ENCODE measurements at regions of chr7 and their contacts with region 1.

Region 1: GRCh38 chr7:139370301-139370942 is 10.7 kb downstream of the LUC7L2 start:
- DNase-seq: no peak
- ATAC-seq: no peak
- H3K4me3 Mint-ChIP-seq: no peak overlapping the region
- H3K27ac Mint-ChIP-seq: no peak overlapping the region
- H3K4me1 Mint-ChIP-seq: peaks cover 42% of the 10 kb centered on the region
- H3K27me3 Mint-ChIP-seq: no peaks in the 10 kb centered on the region
- CTCF ChIP-seq: no peak

Region 2: GRCh38 chr7:138515001-138515528 is 855.4 kb before region 1 on chr7:
- CTCF ChIA-PET with region 1: no interaction called
- POLR2A ChIA-PET with region 1: no interaction called
- intact Hi-C with region 1: no loop called
- DNase-seq: no peak
- ATAC-seq: no peak
- H3K4me3 Mint-ChIP-seq: no peak overlapping the region
- H3K27ac Mint-ChIP-seq: no peak overlapping the region
- H3K4me1 Mint-ChIP-seq: peaks cover 12% of the 10 kb centered on the region
- H3K27me3 Mint-ChIP-seq: no peaks in the 10 kb centered on the region
- CTCF ChIP-seq: no peak

Region 3: DNA sequence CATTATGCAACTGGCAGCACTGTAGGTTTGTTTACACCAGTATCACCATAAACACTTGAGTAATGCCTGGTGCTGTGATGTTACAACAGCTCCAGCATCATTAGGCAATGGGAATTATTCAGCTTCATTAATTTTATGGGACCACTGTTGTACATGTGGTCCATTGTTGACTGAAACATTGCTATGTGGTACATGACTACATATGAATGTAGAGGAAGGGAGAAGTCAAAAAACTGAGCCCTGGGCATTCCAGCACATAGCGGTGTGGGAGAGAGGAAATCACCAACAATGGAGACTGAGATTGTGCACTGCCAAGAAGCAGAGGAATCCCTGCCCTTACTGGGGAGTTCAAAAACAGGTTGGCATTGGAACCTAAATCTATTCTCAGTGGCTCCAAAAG is 821.3 kb before region 1 on chr7:
- CTCF ChIA-PET with region 1: no interaction called
- POLR2A ChIA-PET with region 1: no interaction called
- intact Hi-C with region 1: no loop called
- DNase-seq: no peak
- ATAC-seq: no peak
- H3K4me3 Mint-ChIP-seq: no peak overlapping the region
- H3K27ac Mint-ChIP-seq: no peak overlapping the region
- H3K4me1 Mint-ChIP-seq: no peaks in the 10 kb centered on the region
- H3K27me3 Mint-ChIP-seq: no peaks in the 10 kb centered on the region
- CTCF ChIP-seq: no peak

Region 4: DNA sequence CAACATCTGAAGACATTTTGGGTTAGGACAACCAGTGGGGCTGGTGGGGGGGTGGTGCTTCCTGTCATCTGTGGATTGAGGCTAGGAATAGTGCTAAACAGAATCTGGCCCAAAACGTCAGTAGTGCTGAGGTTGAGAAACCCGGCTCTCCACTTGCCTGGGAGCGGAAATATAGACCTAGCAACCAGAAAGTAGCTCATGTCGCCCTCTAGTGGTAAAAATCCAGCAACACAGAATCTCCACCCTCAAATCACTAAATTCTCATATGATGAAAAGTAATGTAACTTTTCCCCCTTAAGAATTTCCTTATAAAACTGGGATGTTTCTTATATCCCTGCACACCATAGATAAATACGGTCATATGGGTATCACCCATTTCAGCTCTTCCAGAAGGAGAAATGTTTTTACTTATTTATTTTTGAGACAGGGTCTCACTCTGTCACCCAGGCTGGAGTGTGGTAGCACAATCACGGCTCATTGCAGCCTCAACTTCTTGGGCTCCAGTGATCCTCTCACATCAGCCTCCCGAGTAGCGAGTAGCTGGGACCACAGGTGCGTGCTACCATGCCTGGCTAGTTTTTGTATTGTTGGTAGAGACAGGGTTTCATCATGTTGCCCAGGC is 295.3 kb before region 1 on chr7:
- CTCF ChIA-PET with region 1: no interaction called
- POLR2A ChIA-PET with region 1: no interaction called
- intact Hi-C with region 1: no loop called
- DNase-seq: no peak
- ATAC-seq: peak; percentile 87
- H3K4me3 Mint-ChIP-seq: no peak overlapping the region
- H3K27ac Mint-ChIP-seq: peak overlapping the region; percentile 60
- H3K4me1 Mint-ChIP-seq: peaks cover 17% of the 10 kb centered on the region
- H3K27me3 Mint-ChIP-seq: no peaks in the 10 kb centered on the region
- CTCF ChIP-seq: no peak

Region 5: GRCh38 chr7:139359366-139360209 is 10.8 kb before region 1 on chr7 and contains the start of gene LUC7L2:
- CTCF ChIA-PET with region 1: no interaction called
- POLR2A ChIA-PET with region 1: interaction called, 11 read pairs
- intact Hi-C with region 1: no loop called
- DNase-seq: peak; percentile 97
- ATAC-seq: peak; percentile 78
- H3K4me3 Mint-ChIP-seq: peak within 1 kb of the TSS; percentile 98
- H3K27ac Mint-ChIP-seq: peak within 1 kb of the TSS; percentile 100
- H3K4me1 Mint-ChIP-seq: peaks cover 41% of the 10 kb centered on the region
- H3K27me3 Mint-ChIP-seq: no peaks in the 10 kb centered on the region
- CTCF ChIP-seq: no peak
- total RNA-seq, gene LUC7L2: 94.0 and 118 TPM in 2 replicates

Region 6: DNA sequence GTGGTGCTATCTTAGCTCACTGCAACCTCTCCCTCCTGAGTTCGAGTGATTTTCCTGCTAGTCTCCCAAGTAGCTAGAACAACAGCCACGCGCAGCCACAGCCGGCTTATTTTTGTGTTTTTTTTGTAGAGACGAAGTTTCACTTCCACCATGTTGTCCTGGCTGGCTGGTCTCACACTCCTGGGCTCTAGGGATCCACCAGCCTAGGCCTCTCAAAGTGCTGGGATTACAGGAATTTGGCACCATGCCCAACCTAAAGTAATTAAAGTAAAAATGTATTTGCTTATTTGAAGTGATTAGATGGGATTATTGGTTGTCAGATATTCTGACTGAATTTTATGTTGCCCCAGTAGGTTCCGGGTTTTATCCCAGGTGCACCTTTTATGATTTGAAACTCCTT is 12.0 kb after region 1 on chr7:
- CTCF ChIA-PET with region 1: interaction called, 3 read pairs
- POLR2A ChIA-PET with region 1: interaction called, 9 read pairs
- intact Hi-C with region 1: loop called (anchors 2 kb)
- DNase-seq: no peak
- ATAC-seq: no peak
- H3K4me3 Mint-ChIP-seq: no peak overlapping the region
- H3K27ac Mint-ChIP-seq: no peak overlapping the region
- H3K4me1 Mint-ChIP-seq: peaks cover 6% of the 10 kb centered on the region
- H3K27me3 Mint-ChIP-seq: no peaks in the 10 kb centered on the region
- CTCF ChIP-seq: no peak

Region 7: GRCh38 chr7:139407555-139407954 is 37.1 kb after region 1 on chr7:
- CTCF ChIA-PET with region 1: no interaction called
- POLR2A ChIA-PET with region 1: no interaction called
- intact Hi-C with region 1: loop called (anchors 5 kb)
- DNase-seq: no peak
- ATAC-seq: no peak
- H3K4me3 Mint-ChIP-seq: no peak overlapping the region
- H3K27ac Mint-ChIP-seq: no peak overlapping the region
- H3K4me1 Mint-ChIP-seq: no peaks in the 10 kb centered on the region
- H3K27me3 Mint-ChIP-seq: no peaks in the 10 kb centered on the region
- CTCF ChIP-seq: no peak